ENCODE measurements at regions of chr20 and their contacts with region 1.

Region 1: GRCh38 chr20:43530321-43531090 is 23.0 kb downstream of the L3MBTL1 start:
- DNase-seq: no peak
- ATAC-seq: peak; percentile 51; the same call in 1 of the 2 replicates
- H3K4me3 ChIP-seq: no peak overlapping the region
- H3K27ac ChIP-seq: no peak overlapping the region
- H3K4me1 ChIP-seq: no peaks in the 10 kb centered on the region
- H3K27me3 ChIP-seq: no peaks in the 10 kb centered on the region
- CTCF ChIP-seq: no peak

Region 2: GRCh38 chr20:43579861-43580793 is 49.6 kb after region 1 on chr20:
- CTCF ChIA-PET with region 1: no interaction called
- POLR2A ChIA-PET with region 1: interaction called, 14 read pairs
- in situ Hi-C with region 1: no loop called
- intact Hi-C with region 1: no loop called
- DNase-seq: no peak
- ATAC-seq: no peak
- H3K4me3 ChIP-seq: no peak overlapping the region
- H3K27ac ChIP-seq: no peak overlapping the region
- H3K4me1 ChIP-seq: no peaks in the 10 kb centered on the region
- H3K27me3 ChIP-seq: no peaks in the 10 kb centered on the region
- CTCF ChIP-seq: no peak

Region 3: GRCh38 chr20:43666376-43667328 is 136.1 kb after region 1 on chr20 and contains the start of gene MYBL2:
- CTCF ChIA-PET with region 1: no interaction called
- POLR2A ChIA-PET with region 1: interaction called, 11 read pairs
- in situ Hi-C with region 1: no loop called
- intact Hi-C with region 1: no loop called
- DNase-seq: no peak
- ATAC-seq: peak; percentile 95
- H3K4me3 ChIP-seq: peak within 1 kb of the TSS; percentile 60 to 73
- H3K27ac ChIP-seq: peak within 1 kb of the TSS; percentile 74
- H3K4me1 ChIP-seq: peaks cover 21% of the 10 kb centered on the region; the same call in 1 of the 2 replicates
- H3K27me3 ChIP-seq: no peaks in the 10 kb centered on the region
- CTCF ChIP-seq: no peak
- total RNA-seq, gene MYBL2: 138 TPM

Region 4: DNA sequence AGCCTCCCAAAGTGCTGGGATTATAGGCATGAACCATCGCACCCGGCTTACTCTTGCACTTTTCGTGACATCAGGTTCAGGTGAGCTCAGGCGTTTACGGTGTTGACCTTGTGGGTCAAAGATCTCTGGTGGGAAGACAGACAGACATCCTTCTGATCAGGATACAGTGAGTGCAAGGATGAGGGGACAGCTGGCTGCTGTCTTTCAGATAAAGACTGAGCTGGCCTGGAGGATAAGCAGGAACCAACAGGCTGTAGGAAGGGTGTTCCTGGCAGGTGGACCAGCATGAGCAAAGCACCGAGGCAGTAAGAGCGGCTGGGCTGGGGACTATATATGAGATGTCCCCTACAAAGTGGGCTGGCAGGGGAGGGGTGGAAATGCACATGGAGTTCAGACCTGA is 207.4 kb after region 1 on chr20:
- CTCF ChIA-PET with region 1: interaction called, 10 read pairs
- POLR2A ChIA-PET with region 1: no interaction called
- in situ Hi-C with region 1: no loop called
- intact Hi-C with region 1: no loop called
- DNase-seq: no peak
- ATAC-seq: no peak
- H3K4me3 ChIP-seq: no peak overlapping the region
- H3K27ac ChIP-seq: no peak overlapping the region
- H3K4me1 ChIP-seq: no peaks in the 10 kb centered on the region
- H3K27me3 ChIP-seq: no peaks in the 10 kb centered on the region
- CTCF ChIP-seq: no peak